ENCODE measurements at regions of chr2 and their contacts with region 1.

Region 1: GRCh38 chr2:139825726-139826125 is 1045.5 kb upstream of the NXPH2 start:
- DNase-seq: no peak
- H3K4me3 ChIP-seq: no peak overlapping the region
- CTCF ChIP-seq: no peak
- POLR2A ChIP-seq: no peak

Region 2: GRCh38 chr2:140975237-140975636 is 1149.5 kb after region 1 on chr2:
- intact Hi-C with region 1: loop called (anchors 5 kb)
- DNase-seq: no peak
- H3K4me3 ChIP-seq: no peak overlapping the region
- CTCF ChIP-seq: no peak
- POLR2A ChIP-seq: no peak